ENCODE measurements at regions of chr17 and their contacts with region 1.

Region 1: DNA sequence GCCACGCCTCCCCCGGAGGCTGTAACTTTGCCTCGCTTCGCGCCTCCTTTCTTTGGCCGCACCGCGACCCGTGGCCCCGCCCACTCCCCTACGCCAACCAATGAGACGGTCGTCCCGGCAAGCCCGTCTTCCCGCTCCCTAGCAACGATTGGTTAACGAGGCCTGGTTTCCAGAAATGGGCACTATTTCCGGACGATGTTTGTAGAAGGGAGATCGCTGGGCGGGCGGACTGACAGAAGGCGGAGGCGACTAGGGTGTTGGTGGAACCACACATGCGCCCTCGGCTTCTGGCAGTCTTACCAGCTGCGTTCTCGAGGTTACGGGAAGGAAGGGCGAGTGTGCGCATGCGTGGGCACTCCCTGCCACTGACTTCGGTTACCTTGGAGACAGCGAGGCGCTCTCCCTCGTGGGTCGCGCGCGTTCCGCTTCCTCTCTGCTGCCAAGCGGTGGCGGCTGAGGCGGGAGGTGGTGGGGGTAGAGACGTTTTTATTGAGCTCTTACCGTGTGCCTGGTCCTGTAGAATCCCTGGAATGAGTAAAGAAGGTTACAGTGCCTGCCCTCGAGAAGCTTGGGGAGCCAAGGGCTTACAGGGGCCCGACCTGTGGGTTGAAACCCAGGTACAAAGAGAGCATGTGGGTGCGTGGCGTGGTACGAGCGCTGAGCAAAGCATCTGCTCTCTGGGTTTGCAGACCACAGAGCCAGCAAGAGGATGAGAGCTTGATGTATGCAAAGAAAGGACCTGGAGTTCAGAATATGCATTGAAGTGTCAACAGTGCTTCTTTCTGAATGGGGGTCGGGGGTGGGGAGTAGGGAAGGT is 500 bp upstream of the MAP3K14 start:
- DNase-seq: peak; percentile 100
- ATAC-seq: peak; percentile 85 to 89 (median 88)
- H3K4me3 ChIP-seq: peak overlapping the region; percentile 93
- H3K27ac ChIP-seq: peak overlapping the region; percentile 94
- H3K4me1 ChIP-seq: peaks cover 38% of the 10 kb centered on the region
- H3K27me3 ChIP-seq: no peaks in the 10 kb centered on the region
- CTCF ChIP-seq: no peak

Region 2: GRCh38 chr17:45261577-45262515 is 55.5 kb before region 1 on chr17 and contains the start of gene SPATA32:
- intact Hi-C with region 1: loop called in 1 of 2 experiments (anchors 10 kb)
- DNase-seq: peak; percentile 63 to 76
- ATAC-seq: peak in 3 of 4 donors; percentile 7 to 29 (median 8)
- H3K4me3 ChIP-seq: peak within 1 kb of the TSS; percentile 68
- H3K27ac ChIP-seq: peak within 1 kb of the TSS; percentile 70
- H3K4me1 ChIP-seq: peaks cover 70% of the 10 kb centered on the region
- H3K27me3 ChIP-seq: no peaks in the 10 kb centered on the region
- CTCF ChIP-seq: no peak
- total RNA-seq, gene SPATA32: 0.11 TPM in 1 of 4 donors, not detected in the others

Region 3: DNA sequence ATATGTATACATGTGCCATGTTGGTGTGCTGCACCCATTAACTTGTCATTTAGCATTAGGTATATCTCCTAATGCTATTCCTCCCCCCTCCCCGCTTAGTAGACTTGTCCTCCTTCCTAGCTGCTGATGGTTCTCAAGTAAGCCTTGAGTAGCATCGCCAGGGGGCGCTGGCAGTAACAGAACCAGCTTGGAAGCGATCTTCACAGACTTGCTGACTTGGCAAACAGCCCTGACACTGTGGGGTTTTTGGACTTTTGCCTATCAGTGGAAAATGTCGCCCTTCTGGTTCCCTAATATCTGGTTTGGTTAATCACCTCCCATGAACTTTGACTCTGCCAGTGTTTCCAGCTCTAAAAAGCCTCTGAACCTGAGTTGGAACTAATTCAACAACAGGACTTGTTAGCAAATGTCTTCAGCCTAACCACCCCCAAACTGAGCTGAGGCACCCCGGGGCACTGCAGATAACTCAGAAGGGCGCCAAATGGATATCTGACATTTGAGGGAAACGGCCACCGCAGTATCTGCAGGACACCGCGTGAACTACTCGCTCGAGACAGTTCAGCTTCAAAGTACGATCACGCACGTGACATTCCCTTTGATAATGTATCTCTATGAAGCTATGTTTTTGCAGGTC is 40.0 kb before region 1 on chr17:
- intact Hi-C with region 1: loop called (anchors 1 to 5 kb)
- DNase-seq: peak; percentile 92 to 96
- ATAC-seq: peak; percentile 60 to 84 (median 72)
- H3K4me3 ChIP-seq: peak overlapping the region; percentile 15
- H3K27ac ChIP-seq: peak overlapping the region; percentile 73
- H3K4me1 ChIP-seq: peaks cover 50% of the 10 kb centered on the region
- H3K27me3 ChIP-seq: no peaks in the 10 kb centered on the region
- CTCF ChIP-seq: peak; percentile 74

Region 4: DNA sequence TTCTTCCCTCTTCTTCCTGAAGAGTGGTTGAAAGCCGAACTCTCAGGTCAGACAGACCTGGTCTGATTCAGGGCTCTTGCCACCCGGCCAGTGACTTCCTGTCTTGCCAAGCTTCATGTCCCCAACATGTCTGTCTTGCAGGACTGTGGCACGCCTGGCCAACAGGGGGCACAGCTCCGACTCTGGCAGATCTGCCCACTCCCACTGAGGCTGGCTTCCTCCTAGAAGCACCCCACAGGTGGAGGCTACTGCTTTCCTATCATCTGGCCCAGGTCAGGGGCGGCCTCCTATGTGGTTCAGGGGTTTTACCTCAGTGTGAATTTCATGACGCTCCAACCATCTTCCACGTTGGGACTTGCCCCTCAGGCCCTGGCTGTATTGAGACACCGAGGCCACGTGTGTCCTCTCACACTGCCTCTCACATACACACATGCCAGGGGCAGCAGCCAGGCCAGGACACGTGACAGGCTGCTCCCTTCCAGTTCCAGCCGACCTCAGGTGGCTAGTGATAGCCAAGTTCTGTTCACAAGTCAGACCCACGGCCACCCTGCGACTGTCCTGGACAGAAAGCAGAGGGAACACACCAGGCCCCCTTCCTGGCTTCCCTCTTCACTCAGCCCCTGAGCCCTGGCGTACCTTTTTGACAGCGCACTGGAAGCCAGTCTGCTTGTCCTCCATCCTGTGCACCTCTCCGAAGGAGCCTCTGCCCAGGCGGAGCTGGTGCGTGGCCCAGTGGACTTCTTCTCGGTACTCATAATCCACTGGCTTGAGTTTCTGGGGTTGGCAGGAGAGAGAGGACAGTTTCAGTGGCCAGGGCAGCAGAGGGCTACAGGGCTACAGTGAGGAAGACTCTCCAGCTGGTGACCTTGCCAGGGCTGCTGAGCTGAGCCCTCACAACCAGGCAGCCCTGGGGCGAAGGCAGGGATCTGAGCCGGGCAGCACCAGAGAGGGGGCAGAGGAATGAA is 32.9 kb before region 1 on chr17:
- intact Hi-C with region 1: loop called (anchors 1 to 5 kb)
- DNase-seq: peak; percentile 80 to 93
- ATAC-seq: peak; percentile 71 to 80 (median 76)
- H3K4me3 ChIP-seq: no peak overlapping the region
- H3K27ac ChIP-seq: peak overlapping the region; percentile 96
- H3K4me1 ChIP-seq: peaks cover 78% of the 10 kb centered on the region
- H3K27me3 ChIP-seq: no peaks in the 10 kb centered on the region
- CTCF ChIP-seq: peak; percentile 40

Region 5: GRCh38 chr17:45371414-45372327 is 54.4 kb after region 1 on chr17:
- intact Hi-C with region 1: loop called in 1 of 2 experiments (anchors 2 kb)
- DNase-seq: peak; percentile 90 to 92
- ATAC-seq: peak; percentile 95 to 98 (median 96)
- H3K4me3 ChIP-seq: peak overlapping the region; percentile 51
- H3K27ac ChIP-seq: peak overlapping the region; percentile 81
- H3K4me1 ChIP-seq: peaks cover 34% of the 10 kb centered on the region
- H3K27me3 ChIP-seq: no peaks in the 10 kb centered on the region
- CTCF ChIP-seq: no peak

Region 6: GRCh38 chr17:45385331-45385997 is 68.1 kb after region 1 on chr17:
- intact Hi-C with region 1: loop called in 1 of 2 experiments (anchors 5 kb)
- DNase-seq: peak; percentile 89 to 94
- ATAC-seq: peak; percentile 90 to 99 (median 94)
- H3K4me3 ChIP-seq: no peak overlapping the region
- H3K27ac ChIP-seq: peak overlapping the region; percentile 46
- H3K4me1 ChIP-seq: peaks cover 4% of the 10 kb centered on the region
- H3K27me3 ChIP-seq: peaks cover 0 to 1% (median 0%) of the 10 kb centered on the region in 3 donors
- CTCF ChIP-seq: peak; percentile 99